Activated CD4-positive, alpha-beta T cell treated with anti-CD3 and anti-CD28 coated beads for 36 hours (primary cell): ENCODE measurements at regions of chr2 and their contacts with region 1.

Region 1: DNA sequence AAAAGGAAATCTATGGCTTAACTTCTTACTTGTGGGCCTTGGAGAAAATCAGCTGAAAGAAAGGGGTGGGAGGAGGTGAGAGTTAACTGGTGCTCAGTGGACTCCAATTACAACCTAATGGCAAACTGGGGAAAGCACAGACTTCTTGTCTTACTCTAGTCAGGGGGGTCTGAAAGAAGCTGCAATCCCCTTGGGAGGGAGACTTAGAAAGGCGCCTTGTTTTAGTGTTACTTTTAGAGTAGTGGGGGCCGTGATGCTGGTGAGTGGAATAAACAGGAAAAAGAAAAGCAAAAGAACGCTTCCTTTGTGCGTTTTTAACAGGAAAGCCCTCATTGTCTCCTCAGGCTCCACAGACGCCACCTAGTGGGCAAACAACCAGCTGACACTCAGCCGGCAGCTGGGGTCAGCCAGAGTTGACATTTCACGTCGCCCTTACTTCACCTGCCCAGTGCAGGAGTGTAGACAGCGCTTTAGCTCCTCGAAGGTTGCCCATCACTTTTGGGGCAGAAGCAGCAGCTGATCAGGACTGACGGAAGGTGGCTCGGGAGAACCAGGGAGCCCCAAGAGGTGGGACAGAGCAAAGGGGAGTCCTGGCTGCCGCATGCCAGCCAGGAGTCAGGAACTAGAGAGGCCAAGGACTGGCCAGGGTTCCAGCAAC is 55.9 kb upstream of the GORASP2 start:
- DNase-seq: peak; percentile 89
- ATAC-seq: peak; percentile 99
- H3K4me3 Mint-ChIP-seq: peak overlapping the region; percentile 40
- H3K27ac Mint-ChIP-seq: peak overlapping the region; percentile 17
- H3K4me1 Mint-ChIP-seq: peaks cover 13% of the 10 kb centered on the region
- H3K27me3 Mint-ChIP-seq: no peaks in the 10 kb centered on the region

Region 2: GRCh38 chr2:170361090-170361936 is 511.9 kb before region 1 on chr2:
- CTCF ChIA-PET with region 1: interaction called, 10 read pairs
- POLR2A ChIA-PET with region 1: no interaction called
- intact Hi-C with region 1: loop called in 1 of 2 experiments (anchors 5 kb)
- DNase-seq: peak; percentile 76
- ATAC-seq: peak; percentile 58
- H3K4me3 Mint-ChIP-seq: no peak overlapping the region
- H3K27ac Mint-ChIP-seq: peak overlapping the region; percentile 90
- H3K4me1 Mint-ChIP-seq: peaks cover 29% of the 10 kb centered on the region
- H3K27me3 Mint-ChIP-seq: peaks cover 7% of the 10 kb centered on the region

Region 3: DNA sequence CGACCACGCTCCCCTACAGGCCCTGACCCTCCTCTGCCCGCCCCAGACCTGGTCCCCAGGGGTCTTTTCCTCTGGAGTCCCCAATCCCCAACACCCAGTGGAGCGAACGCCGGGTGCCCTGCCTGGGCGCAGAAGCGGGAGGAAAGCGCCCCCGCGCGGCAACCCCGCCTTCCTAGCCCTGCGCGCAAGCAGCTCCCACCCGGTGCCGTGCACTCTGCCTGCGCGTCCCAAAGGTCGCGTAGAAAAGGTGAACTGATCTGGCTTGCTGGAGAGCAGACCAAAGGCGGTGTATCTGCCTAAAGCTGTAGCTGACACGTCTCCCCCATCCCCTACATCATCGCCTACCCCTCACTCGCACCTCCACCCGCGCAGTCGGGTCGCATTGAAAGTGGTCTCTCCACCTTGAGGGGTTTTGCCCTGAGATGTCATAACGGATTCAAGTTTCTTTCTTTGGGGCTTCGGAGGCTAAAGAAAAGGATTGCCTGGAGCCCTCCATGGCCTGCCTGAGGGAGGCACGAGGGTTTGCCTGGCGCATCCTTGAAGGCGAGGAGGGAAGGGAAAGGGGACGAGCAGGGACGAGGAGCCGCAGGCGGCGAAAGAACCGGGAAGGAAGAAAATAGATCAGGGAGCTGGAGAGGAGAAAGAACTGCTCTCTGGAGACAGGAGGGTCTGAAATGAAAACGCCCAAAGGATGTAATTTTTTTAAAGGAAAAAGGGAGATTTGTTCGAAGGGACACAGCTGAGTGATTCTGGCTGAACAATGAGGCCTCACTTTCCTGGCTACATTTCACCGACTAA is 50.7 kb before region 1 on chr2:
- CTCF ChIA-PET with region 1: interaction called, 16 read pairs
- POLR2A ChIA-PET with region 1: no interaction called
- intact Hi-C with region 1: loop called (anchors 2 to 5 kb)
- DNase-seq: peak; percentile 76
- ATAC-seq: peak; percentile 65
- H3K4me3 Mint-ChIP-seq: peak overlapping the region; percentile 60
- H3K27ac Mint-ChIP-seq: no peak overlapping the region
- H3K4me1 Mint-ChIP-seq: peaks cover 38% of the 10 kb centered on the region
- H3K27me3 Mint-ChIP-seq: peaks cover 75% of the 10 kb centered on the region

Region 4: GRCh38 chr2:170863087-170863486 is 10.1 kb before region 1 on chr2:
- CTCF ChIA-PET with region 1: interaction called, 16 read pairs
- POLR2A ChIA-PET with region 1: no interaction called
- intact Hi-C with region 1: no loop called
- DNase-seq: no peak
- ATAC-seq: no peak
- H3K4me3 Mint-ChIP-seq: no peak overlapping the region
- H3K27ac Mint-ChIP-seq: no peak overlapping the region
- H3K4me1 Mint-ChIP-seq: no peaks in the 10 kb centered on the region
- H3K27me3 Mint-ChIP-seq: no peaks in the 10 kb centered on the region

Region 5: GRCh38 chr2:171081649-171082111 is 208.5 kb after region 1 on chr2:
- CTCF ChIA-PET with region 1: no interaction called
- POLR2A ChIA-PET with region 1: no interaction called
- intact Hi-C with region 1: no loop called
- DNase-seq: peak; percentile 48
- ATAC-seq: peak; percentile 70
- H3K4me3 Mint-ChIP-seq: peak overlapping the region; percentile 35
- H3K27ac Mint-ChIP-seq: peak overlapping the region; percentile 91
- H3K4me1 Mint-ChIP-seq: peaks cover 67% of the 10 kb centered on the region
- H3K27me3 Mint-ChIP-seq: no peaks in the 10 kb centered on the region